PC-3 (cell line): ENCODE measurements at regions of chr9 and their contacts with region 1.

Region 1: GRCh38 chr9:70602321-70603019 is 188.0 kb upstream of the KLF9 start:
- DNase-seq: peak; percentile 69
- ATAC-seq: peak; percentile 80
- H3K4me3 ChIP-seq: no peak overlapping the region
- H3K27ac ChIP-seq: no peak overlapping the region
- H3K4me1 ChIP-seq: no peaks in the 10 kb centered on the region
- H3K27me3 ChIP-seq: 0 out of 2 replicates have a peak, but pooled peaks cover 2% of the 10 kb centered on the region
- CTCF ChIP-seq: peak; percentile 72

Region 2: DNA sequence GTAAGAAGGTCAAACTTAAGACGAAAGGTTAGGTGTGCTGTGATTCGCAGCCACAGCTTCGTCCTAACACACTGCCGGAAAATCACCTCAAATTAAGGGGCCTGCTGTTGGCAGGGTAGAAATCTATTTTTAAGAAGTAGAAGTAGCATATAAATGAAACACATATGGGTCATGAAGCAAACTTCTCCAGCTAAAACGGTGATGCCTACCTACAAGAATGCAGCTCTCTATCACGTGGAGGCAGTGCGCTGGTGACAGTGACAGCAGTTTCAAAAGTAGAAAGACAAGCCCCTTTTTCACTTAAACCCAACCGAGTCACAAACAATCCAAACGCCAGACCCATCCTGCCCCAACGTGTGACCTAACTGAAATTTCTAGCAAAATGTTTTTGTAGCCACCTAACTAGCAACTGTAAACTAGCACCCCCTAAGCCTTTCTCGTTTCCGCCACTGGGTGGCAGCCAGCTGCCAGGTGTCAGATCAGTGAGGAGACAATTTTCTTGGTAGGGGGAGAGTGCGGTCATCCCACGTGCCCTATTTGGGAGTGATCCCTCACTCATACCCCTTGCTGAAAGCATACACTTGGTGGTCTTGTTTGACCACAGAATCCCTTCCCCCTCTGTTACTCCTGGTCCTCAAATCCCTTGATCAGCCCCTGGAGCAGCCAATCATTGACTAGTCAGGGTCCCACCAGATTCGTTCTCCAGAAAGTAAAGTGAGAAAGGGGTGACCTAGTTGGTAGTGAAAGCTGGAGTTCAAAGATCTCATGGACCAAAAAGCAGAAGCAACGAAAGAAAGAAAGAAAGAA is 630.6 kb before region 1 on chr9:
- CTCF ChIA-PET with region 1: no interaction called
- POLR2A ChIA-PET with region 1: no interaction called
- intact Hi-C with region 1: loop called (anchors 1 kb)
- DNase-seq: peak; percentile 67
- ATAC-seq: peak; percentile 55
- H3K4me3 ChIP-seq: no peak overlapping the region
- H3K27ac ChIP-seq: no peak overlapping the region
- H3K4me1 ChIP-seq: peaks cover 7% of the 10 kb centered on the region; the same call in 1 of the 2 replicates
- H3K27me3 ChIP-seq: no peaks in the 10 kb centered on the region
- CTCF ChIP-seq: peak; percentile 90

Region 3: GRCh38 chr9:70340572-70340971 is 261.9 kb before region 1 on chr9:
- CTCF ChIA-PET with region 1: no interaction called
- POLR2A ChIA-PET with region 1: no interaction called
- intact Hi-C with region 1: loop called (anchors 1 kb)
- DNase-seq: peak; percentile 40
- ATAC-seq: no peak
- H3K4me3 ChIP-seq: no peak overlapping the region
- H3K27ac ChIP-seq: no peak overlapping the region
- H3K4me1 ChIP-seq: no peaks in the 10 kb centered on the region
- H3K27me3 ChIP-seq: no peaks in the 10 kb centered on the region
- CTCF ChIP-seq: peak; percentile 52

Region 4: DNA sequence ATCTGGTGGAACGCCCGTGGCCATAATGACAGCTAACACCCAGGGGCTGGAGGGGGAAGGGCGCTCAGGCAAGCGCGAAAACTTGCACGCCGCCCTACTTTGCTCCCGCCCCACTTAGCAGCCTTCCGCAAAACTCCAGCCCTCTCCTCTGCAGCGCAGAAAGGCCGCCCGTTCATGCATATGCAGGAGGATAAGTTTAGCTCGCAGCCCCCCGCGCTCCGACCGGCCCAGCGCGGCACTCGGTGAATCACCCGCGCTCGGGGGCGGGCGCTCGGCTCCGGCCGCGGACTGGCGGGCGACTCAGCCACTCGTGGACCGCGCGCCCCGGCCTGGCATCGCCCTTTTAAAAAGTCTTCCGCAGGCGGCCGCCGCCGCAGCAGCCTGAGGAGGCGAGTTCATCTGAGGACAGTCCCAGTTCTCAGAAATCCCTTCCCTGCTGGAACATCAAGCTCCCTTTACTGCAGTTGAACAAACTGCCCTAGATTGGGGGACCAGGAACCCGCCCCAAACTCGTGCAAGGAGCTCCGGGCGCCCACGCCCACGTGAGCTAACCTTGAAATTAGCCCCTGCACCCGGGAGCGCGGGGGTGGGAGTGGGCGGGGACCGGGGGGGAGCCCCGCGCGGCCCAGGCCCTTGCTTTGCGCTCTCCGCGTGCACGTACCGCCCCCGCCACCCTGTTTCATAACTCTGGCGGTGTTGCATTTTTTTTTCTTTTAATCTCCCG is 183.5 kb before region 1 on chr9:
- CTCF ChIA-PET with region 1: no interaction called
- POLR2A ChIA-PET with region 1: no interaction called
- intact Hi-C with region 1: loop called (anchors 10 kb)
- DNase-seq: peak; percentile 81
- ATAC-seq: peak; percentile 55
- H3K4me3 ChIP-seq: peak overlapping the region; percentile 67
- H3K27ac ChIP-seq: peak overlapping the region; percentile 75
- H3K4me1 ChIP-seq: peaks cover 28% of the 10 kb centered on the region
- H3K27me3 ChIP-seq: peaks cover 13% of the 10 kb centered on the region
- CTCF ChIP-seq: no peak